ENCODE measurements at regions of chr18 and their contacts with region 1.

Region 1: GRCh38 chr18:27017901-27018500 is 152.5 kb upstream of the AQP4 start:
- DNase-seq: no peak
- ATAC-seq: no peak

Region 2: DNA sequence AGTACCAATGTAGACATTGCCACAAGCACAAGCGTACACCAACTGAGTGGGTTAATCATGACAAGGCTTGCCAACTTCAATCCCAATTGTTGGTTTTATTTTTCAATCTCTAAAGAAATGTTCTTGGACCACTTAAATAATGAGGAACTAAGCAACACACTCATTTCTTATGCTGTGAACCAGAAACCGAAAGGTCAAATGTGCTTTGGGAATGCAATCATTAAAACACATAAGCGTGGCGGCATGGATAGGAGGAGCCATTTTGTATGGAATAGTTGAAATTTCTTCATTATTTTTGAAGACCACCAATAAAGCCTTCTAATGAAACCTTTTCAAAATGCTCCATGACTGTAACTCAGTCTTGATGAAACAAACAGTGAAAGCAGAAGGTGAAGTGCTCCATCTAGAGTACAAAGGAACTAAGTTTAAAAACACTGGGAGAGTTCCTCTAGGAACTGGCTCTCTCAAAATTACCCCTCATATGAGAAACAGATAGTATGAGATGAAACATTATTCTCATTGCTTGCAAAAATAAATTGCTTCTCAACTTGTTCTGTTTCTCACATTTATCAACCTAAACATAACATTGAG is 280.3 kb after region 1 on chr18:
- intact Hi-C with region 1: loop called in 1 of 2 experiments (anchors 2 kb)
- DNase-seq: no peak
- ATAC-seq: no peak